PC-3 (cell line): ENCODE measurements at regions of chr1 and their contacts with region 1.

Region 1: DNA sequence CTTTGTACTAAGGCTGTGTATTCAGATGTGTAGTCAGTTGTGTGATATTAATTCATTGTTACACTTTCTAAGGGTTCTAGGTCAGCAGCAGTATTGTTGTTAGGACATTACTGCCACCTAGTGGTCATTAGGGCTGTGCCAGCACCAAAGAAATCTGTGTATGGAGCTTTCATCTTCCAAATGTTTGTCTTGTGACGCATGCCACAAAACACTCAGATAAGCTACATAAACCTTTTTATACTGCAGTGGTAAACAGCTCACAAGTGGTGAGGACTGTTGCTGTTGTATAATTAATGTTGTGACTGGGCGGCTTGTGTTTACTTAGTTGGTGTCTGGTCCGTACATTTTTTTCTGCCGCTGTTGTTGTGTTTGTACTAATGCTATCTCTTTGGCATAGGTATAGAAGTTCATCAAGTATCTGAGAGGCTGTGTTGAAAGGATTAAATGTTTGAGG is 51.7 kb downstream of the S1PR1 start:
- DNase-seq: peak; percentile 97
- ATAC-seq: peak; percentile 93
- H3K4me3 ChIP-seq: no peak overlapping the region
- H3K27ac ChIP-seq: no peak overlapping the region
- H3K4me1 ChIP-seq: peaks cover 30% of the 10 kb centered on the region
- H3K27me3 ChIP-seq: no peaks in the 10 kb centered on the region
- CTCF ChIP-seq: peak; percentile 95

Region 2: DNA sequence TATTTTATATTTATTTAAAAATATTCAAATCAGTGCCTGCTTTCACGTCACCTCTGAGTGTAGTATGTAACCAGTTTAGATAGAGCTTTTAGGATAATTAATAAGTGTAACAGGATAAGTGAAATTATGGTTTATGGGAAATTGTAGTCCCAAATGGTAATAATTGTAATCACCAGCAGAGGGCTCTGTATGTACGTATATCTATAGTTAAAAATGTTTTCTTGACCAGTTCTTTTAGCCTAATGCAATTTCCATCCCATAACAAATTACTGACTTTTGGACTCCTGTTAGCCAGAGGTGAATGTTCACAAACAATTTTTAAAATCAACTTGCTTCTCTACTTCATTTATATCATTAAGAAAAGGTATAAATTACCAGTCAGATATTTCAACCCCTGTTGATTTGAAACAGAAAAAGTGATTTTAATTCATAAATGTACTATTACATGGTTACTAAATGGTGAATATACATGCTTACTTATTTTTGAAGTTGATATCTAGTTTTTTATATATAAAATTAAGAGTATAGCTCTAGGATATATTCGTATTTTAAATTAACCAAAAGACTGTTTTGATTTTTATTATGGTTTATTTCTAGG is 367.3 kb before region 1 on chr1:
- CTCF ChIA-PET with region 1: no interaction called
- POLR2A ChIA-PET with region 1: no interaction called
- intact Hi-C with region 1: loop called (anchors 1 kb)
- DNase-seq: peak; percentile 79
- ATAC-seq: no peak
- H3K4me3 ChIP-seq: no peak overlapping the region
- H3K27ac ChIP-seq: no peak overlapping the region
- H3K4me1 ChIP-seq: peaks cover 7% of the 10 kb centered on the region; the same call in 1 of the 2 replicates
- H3K27me3 ChIP-seq: no peaks in the 10 kb centered on the region
- CTCF ChIP-seq: peak; percentile 67

Region 3: GRCh38 chr1:100955322-100955721 is 333.2 kb before region 1 on chr1:
- CTCF ChIA-PET with region 1: no interaction called
- POLR2A ChIA-PET with region 1: no interaction called
- intact Hi-C with region 1: loop called (anchors 1 kb)
- DNase-seq: peak; percentile 66
- ATAC-seq: peak; percentile 81
- H3K4me3 ChIP-seq: no peak overlapping the region
- H3K27ac ChIP-seq: peak overlapping the region; percentile 20
- H3K4me1 ChIP-seq: peaks cover 11% of the 10 kb centered on the region
- H3K27me3 ChIP-seq: no peaks in the 10 kb centered on the region
- CTCF ChIP-seq: no peak

Region 4: GRCh38 chr1:101025657-101026504 is 262.6 kb before region 1 on chr1 and contains the start of gene DPH5:
- CTCF ChIA-PET with region 1: no interaction called
- POLR2A ChIA-PET with region 1: no interaction called
- intact Hi-C with region 1: loop called (anchors 1 kb)
- DNase-seq: peak; percentile 90
- ATAC-seq: peak; percentile 89
- H3K4me3 ChIP-seq: peak within 1 kb of the TSS; percentile 80
- H3K27ac ChIP-seq: peak within 1 kb of the TSS; percentile 65
- H3K4me1 ChIP-seq: peaks cover 30% of the 10 kb centered on the region
- H3K27me3 ChIP-seq: no peaks in the 10 kb centered on the region
- CTCF ChIP-seq: no peak
- total RNA-seq, gene DPH5: 24.9 and 32.8 TPM in 2 replicates

Region 5: GRCh38 chr1:101043776-101044175 is 244.7 kb before region 1 on chr1:
- CTCF ChIA-PET with region 1: interaction called, 3 read pairs
- POLR2A ChIA-PET with region 1: no interaction called
- intact Hi-C with region 1: loop called (anchors 5 kb)
- DNase-seq: peak; percentile 25
- ATAC-seq: peak; percentile 85
- H3K4me3 ChIP-seq: no peak overlapping the region
- H3K27ac ChIP-seq: no peak overlapping the region
- H3K4me1 ChIP-seq: peaks cover 5% of the 10 kb centered on the region
- H3K27me3 ChIP-seq: no peaks in the 10 kb centered on the region
- CTCF ChIP-seq: peak; percentile 35; the same call in 1 of the 2 replicates

Region 6: DNA sequence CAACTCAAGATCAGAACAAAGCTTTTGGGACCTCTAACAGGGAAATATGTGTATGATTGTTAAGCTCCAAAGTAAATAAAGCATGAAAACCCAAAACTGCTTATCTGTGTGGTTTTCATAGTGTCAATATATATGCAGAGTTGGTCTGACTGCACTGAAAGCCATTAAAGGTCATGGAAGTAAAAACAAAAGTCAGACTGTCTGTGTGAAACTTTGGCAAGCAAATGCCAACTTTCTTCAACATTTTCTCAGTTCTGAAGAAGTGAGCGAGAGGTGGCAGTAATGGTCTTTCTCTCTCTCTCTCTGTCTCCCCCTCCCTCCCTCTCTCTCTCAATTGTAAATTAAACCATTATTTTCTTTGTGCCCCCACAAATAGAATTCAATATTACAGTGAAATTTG is 151.8 kb before region 1 on chr1:
- CTCF ChIA-PET with region 1: no interaction called
- POLR2A ChIA-PET with region 1: no interaction called
- intact Hi-C with region 1: loop called (anchors 1 kb)
- DNase-seq: peak; percentile 42
- ATAC-seq: peak; percentile 22; the same call in 1 of the 2 replicates
- H3K4me3 ChIP-seq: no peak overlapping the region
- H3K27ac ChIP-seq: no peak overlapping the region
- H3K4me1 ChIP-seq: peaks cover 16% of the 10 kb centered on the region
- H3K27me3 ChIP-seq: no peaks in the 10 kb centered on the region
- CTCF ChIP-seq: peak; percentile 60

Region 7: GRCh38 chr1:101259744-101260148 is 28.8 kb before region 1 on chr1:
- CTCF ChIA-PET with region 1: interaction called, 6 read pairs
- POLR2A ChIA-PET with region 1: interaction called, 6 read pairs
- intact Hi-C with region 1: loop called (anchors 1 kb)
- DNase-seq: peak; percentile 85
- ATAC-seq: peak; percentile 50
- H3K4me3 ChIP-seq: no peak overlapping the region
- H3K27ac ChIP-seq: peak overlapping the region; percentile 84
- H3K4me1 ChIP-seq: peaks cover 63% of the 10 kb centered on the region
- H3K27me3 ChIP-seq: no peaks in the 10 kb centered on the region
- CTCF ChIP-seq: no peak